ENCODE measurements at regions of chr7 and their contacts with region 1.

Region 1: GRCh38 chr7:140517546-140518369 is 38.5 kb upstream of the MKRN1 start:
- DNase-seq: peak; percentile 94
- H3K4me3 ChIP-seq: no peak overlapping the region; a peak in 1 of 4 replicates
- H3K27ac ChIP-seq: no peak overlapping the region
- H3K4me1 ChIP-seq: peaks cover 0 to 3% of the 10 kb centered on the region in 2 experiments; a peak in 1 of 4 replicates
- H3K27me3 ChIP-seq: no peaks in the 10 kb centered on the region
- CTCF ChIP-seq: peak; percentile 95
- EP300 ChIP-seq: no peak
- RAD21 ChIP-seq: peak; percentile 99

Region 2: GRCh38 chr7:140479062-140479738 is 38.6 kb before region 1 on chr7 and contains the start of gene MKRN1:
- CTCF ChIA-PET with region 1: interaction called, 11 read pairs
- POLR2A ChIA-PET with region 1: no interaction called
- DNase-seq: peak; percentile 99
- H3K4me3 ChIP-seq: peak within 1 kb of the TSS; percentile 65 to 81
- H3K27ac ChIP-seq: peak within 1 kb of the TSS; percentile 70 to 71
- H3K4me1 ChIP-seq: peaks cover 4 to 7% of the 10 kb centered on the region in 2 experiments; a peak in 2 of 4 replicates
- H3K27me3 ChIP-seq: peaks cover 8% of the 10 kb centered on the region; the same call in 1 of the 2 replicates
- CTCF ChIP-seq: no peak
- EP300 ChIP-seq: no peak
- RAD21 ChIP-seq: no peak
- polyA plus RNA-seq, gene MKRN1: 53.5 and 61.4 TPM in 2 replicates

Region 3: DNA sequence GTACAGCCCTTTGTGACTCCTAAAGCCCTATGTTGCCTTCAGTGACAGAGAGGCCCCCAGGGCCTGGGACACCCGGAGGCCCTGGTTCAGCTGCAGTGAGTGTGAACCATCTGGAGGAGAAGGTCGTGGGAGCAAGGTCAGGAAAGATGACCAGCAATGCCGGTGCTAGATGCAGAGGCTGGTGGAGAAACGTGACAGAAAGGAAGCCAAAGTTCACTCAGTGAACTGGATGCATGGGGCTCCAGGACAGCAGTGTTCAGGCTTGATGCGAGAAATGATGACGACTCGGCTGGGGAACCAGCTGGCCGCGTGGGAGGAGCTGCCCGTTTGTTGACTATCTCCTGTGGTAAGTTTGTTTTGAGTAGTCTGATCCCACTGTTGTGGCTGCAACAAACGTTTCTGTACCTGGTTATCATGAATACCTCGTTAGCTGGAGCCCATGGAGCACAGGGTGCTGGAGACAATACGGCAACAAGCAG is 15.7 kb after region 1 on chr7:
- CTCF ChIA-PET with region 1: interaction called, 39 read pairs
- POLR2A ChIA-PET with region 1: no interaction called
- DNase-seq: no peak
- H3K4me3 ChIP-seq: no peak overlapping the region
- H3K27ac ChIP-seq: no peak overlapping the region
- H3K4me1 ChIP-seq: no peaks in the 10 kb centered on the region
- H3K27me3 ChIP-seq: no peaks in the 10 kb centered on the region
- CTCF ChIP-seq: no peak
- EP300 ChIP-seq: no peak
- RAD21 ChIP-seq: no peak

Region 4: DNA sequence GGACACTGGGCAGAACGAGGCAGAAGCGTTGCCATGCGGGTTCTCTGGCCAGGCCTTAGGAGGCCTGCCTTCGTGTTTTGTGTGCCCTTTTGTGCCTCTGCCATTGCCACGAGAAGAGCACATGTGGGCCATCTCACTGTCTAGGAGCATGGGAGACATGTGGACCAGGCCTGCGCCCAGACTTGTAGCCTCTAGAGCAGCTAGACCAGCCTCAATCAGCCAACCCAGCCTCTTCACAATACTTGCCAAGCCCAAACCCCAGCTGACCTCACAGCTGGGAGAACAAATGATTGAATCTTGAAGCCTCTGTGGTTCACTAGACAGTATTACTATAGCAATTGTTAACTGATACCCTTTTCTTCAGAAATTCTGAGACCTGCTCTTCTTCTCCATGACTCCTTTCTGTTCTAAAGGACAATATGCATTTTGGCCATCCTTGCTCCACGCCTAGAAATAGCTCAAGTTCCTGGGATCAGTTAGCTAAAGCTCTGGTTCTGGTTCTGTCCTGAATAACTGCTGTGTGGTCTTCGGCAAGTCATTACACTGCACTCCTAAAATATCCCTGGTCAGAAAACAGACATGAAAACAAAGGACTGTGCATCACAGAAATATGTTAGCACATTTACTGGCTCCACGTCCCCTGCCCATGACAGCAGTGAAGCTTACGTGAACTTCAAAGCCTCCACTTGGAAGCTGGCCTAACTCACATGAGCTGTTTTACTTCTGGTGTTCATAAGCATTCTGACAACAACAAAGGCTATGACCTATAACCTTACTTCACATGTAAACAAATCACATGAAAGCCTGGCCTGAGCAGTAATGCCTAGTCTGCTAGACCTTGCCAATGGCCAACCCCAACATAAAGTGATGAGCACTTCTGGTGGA is 33.8 kb after region 1 on chr7:
- CTCF ChIA-PET with region 1: interaction called, 10 read pairs
- POLR2A ChIA-PET with region 1: interaction called, 5 read pairs
- DNase-seq: no peak
- H3K4me3 ChIP-seq: no peak overlapping the region
- H3K27ac ChIP-seq: no peak overlapping the region
- H3K4me1 ChIP-seq: no peaks in the 10 kb centered on the region
- H3K27me3 ChIP-seq: no peaks in the 10 kb centered on the region
- CTCF ChIP-seq: no peak
- EP300 ChIP-seq: no peak
- RAD21 ChIP-seq: no peak

Region 5: GRCh38 chr7:140646931-140647647 is 129.3 kb after region 1 on chr7:
- CTCF ChIA-PET with region 1: interaction called, 433 read pairs
- POLR2A ChIA-PET with region 1: interaction called, 5 read pairs
- DNase-seq: peak; percentile 90
- H3K4me3 ChIP-seq: no peak overlapping the region
- H3K27ac ChIP-seq: no peak overlapping the region; a peak in 1 of 4 replicates
- H3K4me1 ChIP-seq: peaks cover 0 to 11% of the 10 kb centered on the region in 2 experiments; a peak in 2 of 4 replicates
- H3K27me3 ChIP-seq: no peaks in the 10 kb centered on the region
- CTCF ChIP-seq: peak; percentile 74
- EP300 ChIP-seq: peak in 1 of 2 experiments; percentile 19; a peak in 1 of 4 replicates
- RAD21 ChIP-seq: peak; percentile 57

Region 6: GRCh38 chr7:141014524-141015395 is 497.0 kb after region 1 on chr7 and contains the start of gene MRPS33:
- CTCF ChIA-PET with region 1: interaction called, 10 read pairs
- POLR2A ChIA-PET with region 1: no interaction called
- DNase-seq: peak; percentile 96
- H3K4me3 ChIP-seq: peak within 1 kb of the TSS; percentile 72 to 96
- H3K27ac ChIP-seq: peak within 1 kb of the TSS; percentile 78 to 93
- H3K4me1 ChIP-seq: peaks cover 6 to 16% of the 10 kb centered on the region in 2 experiments; a peak in 3 of 4 replicates
- H3K27me3 ChIP-seq: no peaks in the 10 kb centered on the region
- CTCF ChIP-seq: peak; percentile 86
- EP300 ChIP-seq: no peak; a peak in 2 of 4 replicates
- RAD21 ChIP-seq: no peak; the same call in 1 of the 2 replicates
- polyA plus RNA-seq, gene MRPS33: 88.8 and 95.5 TPM in 2 replicates

Measured in SK-N-SH (cell line).